Aorta (tissue), 5 donors: ENCODE measurements at regions of chr2 and their contacts with region 1.

Region 1: GRCh38 chr2:156538083-156538504 is 101.9 kb downstream of the GPD2 start:
- DNase-seq: no peak
- ATAC-seq: no peak
- H3K4me3 ChIP-seq: no peak overlapping the region
- H3K27ac ChIP-seq: no peak overlapping the region
- H3K4me1 ChIP-seq: no peaks in the 10 kb centered on the region
- H3K27me3 ChIP-seq: no peaks in the 10 kb centered on the region

Region 2: GRCh38 chr2:156445296-156446217 is 92.5 kb before region 1 on chr2:
- intact Hi-C with region 1: loop called in 1 of 2 experiments (anchors 10 kb)
- DNase-seq: no peak
- ATAC-seq: peak; percentile 75
- H3K4me3 ChIP-seq: no peak overlapping the region
- H3K27ac ChIP-seq: no peak overlapping the region
- H3K4me1 ChIP-seq: no peaks in the 10 kb centered on the region
- H3K27me3 ChIP-seq: no peaks in the 10 kb centered on the region

Region 3: GRCh38 chr2:156490466-156490840 is 47.6 kb before region 1 on chr2:
- intact Hi-C with region 1: no loop called
- DNase-seq: no peak
- ATAC-seq: no peak
- H3K4me3 ChIP-seq: no peak overlapping the region
- H3K27ac ChIP-seq: no peak overlapping the region
- H3K4me1 ChIP-seq: no peaks in the 10 kb centered on the region
- H3K27me3 ChIP-seq: no peaks in the 10 kb centered on the region

Region 4: GRCh38 chr2:156845806-156846558 is 307.9 kb after region 1 on chr2:
- intact Hi-C with region 1: no loop called
- DNase-seq: no peak
- ATAC-seq: no peak
- H3K4me3 ChIP-seq: no peak overlapping the region
- H3K27ac ChIP-seq: no peak overlapping the region
- H3K4me1 ChIP-seq: no peaks in the 10 kb centered on the region
- H3K27me3 ChIP-seq: no peaks in the 10 kb centered on the region